GM12878 (cell line): ENCODE measurements at regions of chr12 and their contacts with region 1.

Region 1: DNA sequence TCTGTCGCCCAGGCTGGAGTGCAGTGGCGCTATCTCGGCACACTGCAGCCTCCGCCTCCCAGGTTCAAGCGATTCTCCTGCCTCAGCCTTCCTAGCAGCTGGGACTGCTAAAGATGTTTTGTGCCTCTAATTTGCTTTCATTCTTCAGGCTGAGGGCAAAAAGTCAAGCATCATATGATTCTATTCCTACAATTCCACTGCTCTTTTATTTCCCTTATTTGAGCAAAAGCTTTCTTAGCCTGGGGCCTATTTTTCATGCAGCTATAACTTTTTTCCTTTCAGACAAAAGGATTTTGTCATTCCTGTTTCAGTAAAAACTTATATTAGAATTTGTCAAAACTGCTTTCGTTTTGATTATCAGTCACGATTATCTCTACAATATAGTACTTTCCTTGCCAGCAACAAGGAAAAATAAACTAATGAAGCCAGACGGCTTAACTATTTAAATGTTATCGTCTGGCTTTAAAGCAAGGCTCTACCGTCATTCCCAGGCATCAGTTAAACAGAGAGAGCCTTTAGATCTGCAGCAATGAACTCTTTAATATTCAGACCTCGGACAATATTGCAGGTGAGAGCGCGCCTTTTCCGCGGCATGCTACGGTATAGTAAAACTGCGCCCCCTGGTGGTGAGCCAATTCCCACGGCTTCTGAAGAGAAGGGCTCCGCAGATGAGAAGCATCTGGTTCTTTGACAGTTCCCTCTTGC is 1.4 kb upstream of the SLC2A13 start:
- DNase-seq: peak; percentile 42
- ATAC-seq: peak; percentile 64
- H3K4me3 ChIP-seq: peak overlapping the region; percentile 33
- H3K27ac ChIP-seq: no peak overlapping the region
- H3K4me1 ChIP-seq: peaks cover 11% of the 10 kb centered on the region
- H3K27me3 ChIP-seq: peaks cover 0 to 13% of the 10 kb centered on the region in 2 experiments; a peak in 2 of 4 replicates
- CTCF ChIP-seq: peak; percentile 77 to 87 (median 86)
- EP300 ChIP-seq: no peak
- POLR2A ChIP-seq: no peak
- RAD21 ChIP-seq: peak; percentile 63

Region 2: DNA sequence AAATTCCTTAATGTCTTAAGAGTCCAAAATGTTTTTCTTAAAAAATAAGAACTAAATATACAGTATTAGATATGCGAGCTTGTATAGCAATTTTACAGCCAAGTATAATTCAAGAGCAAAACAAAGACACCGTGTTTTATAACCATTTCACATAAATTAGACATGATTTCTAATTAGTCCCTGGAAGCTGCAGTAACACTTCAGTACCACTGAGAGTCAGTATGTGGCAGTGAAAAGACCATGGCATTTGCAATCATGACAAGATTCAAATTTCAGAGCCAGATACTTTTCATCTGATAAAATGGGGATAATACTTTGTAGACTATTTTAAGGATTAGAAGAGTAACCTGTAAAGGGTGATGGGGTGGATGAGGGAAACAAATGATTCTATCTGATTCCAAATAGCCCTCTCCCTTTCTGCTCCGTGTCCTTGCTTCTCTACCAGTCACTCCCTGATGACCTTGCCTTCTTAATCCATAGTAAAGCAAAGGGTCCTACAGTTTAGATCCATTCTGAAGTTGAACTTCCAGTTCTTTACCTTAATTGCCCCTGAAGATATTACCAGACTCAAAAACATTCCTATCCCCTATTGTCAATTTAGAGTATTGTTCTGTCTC is 342.2 kb before region 1 on chr12:
- CTCF ChIA-PET with region 1: no interaction called
- POLR2A ChIA-PET with region 1: no interaction called
- RAD21 ChIA-PET with region 1: no interaction called
- SMC1A ChIA-PET with region 1: no interaction called
- in situ Hi-C with region 1: no loop called
- intact Hi-C with region 1: loop called (anchors 1 kb)
- DNase-seq: no peak
- ATAC-seq: peak; percentile 74
- H3K4me3 ChIP-seq: no peak overlapping the region
- H3K27ac ChIP-seq: no peak overlapping the region
- H3K4me1 ChIP-seq: no peaks in the 10 kb centered on the region
- H3K27me3 ChIP-seq: no peaks in the 10 kb centered on the region
- CTCF ChIP-seq: peak; percentile 66 to 75 (median 67)
- EP300 ChIP-seq: no peak
- POLR2A ChIP-seq: no peak
- RAD21 ChIP-seq: peak; percentile 85

Region 3: DNA sequence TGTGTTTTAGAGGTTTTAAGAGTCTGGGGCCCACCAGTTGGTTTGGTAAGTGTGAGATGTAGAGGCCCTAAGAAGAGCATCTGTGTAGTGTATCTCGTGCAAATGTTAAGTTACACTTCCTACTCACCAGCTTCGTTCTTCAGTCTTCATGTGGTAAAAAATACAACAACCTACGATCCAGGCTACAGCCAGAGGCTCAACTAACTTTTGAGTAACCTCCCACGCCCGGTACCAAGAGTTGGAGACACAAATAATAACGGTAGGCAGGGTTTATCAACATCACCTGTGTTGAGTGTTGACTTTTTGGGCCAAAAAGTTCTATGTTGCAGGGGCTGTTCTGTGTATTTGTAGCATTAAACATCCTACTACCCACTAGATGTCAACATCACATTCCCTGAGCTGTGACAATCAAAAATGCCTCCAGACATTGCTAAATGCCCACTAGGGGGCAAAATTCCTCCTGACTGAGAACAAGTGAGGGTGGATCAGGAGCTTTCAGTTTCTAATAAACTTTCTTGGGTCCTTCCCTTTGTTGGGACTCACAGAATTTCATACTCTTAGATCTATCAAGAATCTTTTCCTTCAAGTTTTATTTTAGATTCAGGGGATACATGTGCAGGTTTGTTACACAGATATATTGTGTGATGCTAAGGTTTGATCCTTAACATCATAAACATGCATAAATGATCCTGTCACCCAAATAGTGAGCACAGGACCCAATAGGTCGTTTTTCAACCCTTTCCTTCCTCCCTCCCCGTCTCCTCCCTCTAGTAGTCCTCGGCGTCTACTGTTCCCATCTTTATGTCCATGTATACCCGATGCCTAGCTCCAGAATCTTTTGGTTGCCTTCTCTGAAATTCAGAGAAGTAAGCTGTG is 96.1 kb before region 1 on chr12:
- CTCF ChIA-PET with region 1: interaction called, 103 read pairs
- POLR2A ChIA-PET with region 1: interaction called, 3 read pairs
- RAD21 ChIA-PET with region 1: interaction called, 76 read pairs
- SMC1A ChIA-PET with region 1: interaction called, 76 read pairs
- in situ Hi-C with region 1: loop called (anchors 5 kb)
- intact Hi-C with region 1: loop called (anchors 1 kb)
- DNase-seq: peak; percentile 35
- ATAC-seq: peak; percentile 97
- H3K4me3 ChIP-seq: no peak overlapping the region
- H3K27ac ChIP-seq: no peak overlapping the region
- H3K4me1 ChIP-seq: no peaks in the 10 kb centered on the region
- H3K27me3 ChIP-seq: no peaks in the 10 kb centered on the region
- CTCF ChIP-seq: peak; percentile 67 to 85 (median 79)
- EP300 ChIP-seq: no peak
- POLR2A ChIP-seq: no peak
- RAD21 ChIP-seq: peak; percentile 71

Region 4: DNA sequence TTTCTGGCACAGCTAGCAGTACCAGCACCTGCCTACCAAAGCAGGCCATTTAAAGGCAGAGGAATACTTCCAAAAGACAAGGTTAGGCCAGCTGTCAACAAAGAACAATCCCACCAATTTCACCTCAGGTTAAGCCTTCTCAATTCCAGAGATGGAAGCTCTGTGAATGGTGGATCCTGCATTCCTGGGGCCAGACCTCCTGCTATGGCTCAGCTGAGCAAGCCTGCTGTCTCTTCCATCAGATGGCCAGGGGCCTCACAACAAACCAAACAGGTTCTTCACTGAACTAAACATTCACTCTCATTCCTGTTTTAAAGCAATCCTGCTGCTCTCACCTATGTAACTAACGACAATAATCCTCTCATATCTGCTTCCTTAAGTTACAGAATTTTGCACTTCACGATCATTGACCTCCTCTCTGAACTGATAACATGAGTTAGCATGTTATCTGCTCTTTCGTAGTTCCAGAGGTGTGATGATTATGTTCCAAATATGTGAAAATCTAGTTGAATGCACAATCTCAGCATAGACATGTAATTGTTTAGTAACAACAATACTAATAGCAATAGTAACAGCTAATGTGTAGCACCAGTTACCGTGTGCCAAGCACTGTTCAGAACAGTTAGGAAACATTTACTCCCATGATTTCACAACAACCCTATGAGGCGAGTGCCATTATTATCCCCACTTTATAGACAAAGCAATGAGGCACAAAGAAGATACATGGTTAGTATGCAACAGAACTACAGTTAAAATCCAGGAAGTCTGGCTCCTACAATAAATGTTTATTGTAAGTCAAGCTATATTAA is 74.6 kb before region 1 on chr12:
- CTCF ChIA-PET with region 1: interaction called, 35 read pairs
- POLR2A ChIA-PET with region 1: interaction called, 3 read pairs
- RAD21 ChIA-PET with region 1: interaction called, 18 read pairs
- SMC1A ChIA-PET with region 1: interaction called, 19 read pairs
- in situ Hi-C with region 1: no loop called
- intact Hi-C with region 1: no loop called
- DNase-seq: no peak
- ATAC-seq: 0 out of 3 replicates have a peak, but pooled peaks have one; percentile 18
- H3K4me3 ChIP-seq: no peak overlapping the region
- H3K27ac ChIP-seq: no peak overlapping the region
- H3K4me1 ChIP-seq: no peaks in the 10 kb centered on the region
- H3K27me3 ChIP-seq: no peaks in the 10 kb centered on the region
- CTCF ChIP-seq: no peak
- EP300 ChIP-seq: no peak
- POLR2A ChIP-seq: no peak
- RAD21 ChIP-seq: no peak

Region 5: GRCh38 chr12:40086471-40086870 is 20.8 kb before region 1 on chr12:
- CTCF ChIA-PET with region 1: interaction called, 7 read pairs
- POLR2A ChIA-PET with region 1: no interaction called
- RAD21 ChIA-PET with region 1: no interaction called
- SMC1A ChIA-PET with region 1: interaction called, 4 read pairs
- in situ Hi-C with region 1: no loop called
- intact Hi-C with region 1: loop called (anchors 2 kb)
- DNase-seq: no peak
- ATAC-seq: no peak
- H3K4me3 ChIP-seq: no peak overlapping the region
- H3K27ac ChIP-seq: no peak overlapping the region
- H3K4me1 ChIP-seq: no peaks in the 10 kb centered on the region
- H3K27me3 ChIP-seq: no peaks in the 10 kb centered on the region
- CTCF ChIP-seq: no peak
- EP300 ChIP-seq: no peak
- POLR2A ChIP-seq: no peak
- RAD21 ChIP-seq: no peak

Region 6: DNA sequence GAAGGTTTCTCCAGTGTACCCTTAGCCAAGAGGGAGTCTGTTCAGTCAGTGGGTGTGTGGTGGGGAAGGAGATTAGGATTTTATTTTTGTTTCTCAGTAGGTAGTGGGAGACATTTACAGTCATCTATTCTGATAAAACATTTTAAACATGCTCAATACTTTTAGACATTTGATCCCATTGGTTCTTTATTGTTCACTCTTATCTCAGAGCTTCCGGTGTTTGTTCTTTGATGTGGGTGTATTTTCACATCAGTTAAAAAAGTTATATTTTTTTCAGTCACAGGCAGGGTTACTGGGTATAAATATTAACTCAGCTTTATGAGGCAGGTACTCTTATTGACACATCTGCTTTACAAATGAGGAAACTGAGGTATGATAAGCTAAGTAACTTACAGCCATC is 74.2 kb after region 1 on chr12:
- CTCF ChIA-PET with region 1: no interaction called
- POLR2A ChIA-PET with region 1: no interaction called
- RAD21 ChIA-PET with region 1: no interaction called
- SMC1A ChIA-PET with region 1: no interaction called
- in situ Hi-C with region 1: no loop called
- intact Hi-C with region 1: no loop called
- DNase-seq: no peak
- ATAC-seq: no peak
- H3K4me3 ChIP-seq: no peak overlapping the region
- H3K27ac ChIP-seq: no peak overlapping the region
- H3K4me1 ChIP-seq: no peaks in the 10 kb centered on the region
- H3K27me3 ChIP-seq: no peaks in the 10 kb centered on the region; a peak in 1 of 4 replicates
- CTCF ChIP-seq: no peak
- EP300 ChIP-seq: no peak
- POLR2A ChIP-seq: no peak
- RAD21 ChIP-seq: no peak

Region 7: GRCh38 chr12:41452838-41453407 is 1345.7 kb after region 1 on chr12:
- CTCF ChIA-PET with region 1: no interaction called
- POLR2A ChIA-PET with region 1: no interaction called
- RAD21 ChIA-PET with region 1: no interaction called
- SMC1A ChIA-PET with region 1: no interaction called
- in situ Hi-C with region 1: no loop called
- intact Hi-C with region 1: no loop called
- DNase-seq: no peak
- ATAC-seq: no peak
- H3K4me3 ChIP-seq: no peak overlapping the region
- H3K27ac ChIP-seq: no peak overlapping the region
- H3K4me1 ChIP-seq: no peaks in the 10 kb centered on the region
- H3K27me3 ChIP-seq: no peaks in the 10 kb centered on the region
- CTCF ChIP-seq: no peak
- EP300 ChIP-seq: no peak
- POLR2A ChIP-seq: no peak
- RAD21 ChIP-seq: no peak